ENCODE measurements at regions of chr9 and their contacts with region 1.

Region 1: DNA sequence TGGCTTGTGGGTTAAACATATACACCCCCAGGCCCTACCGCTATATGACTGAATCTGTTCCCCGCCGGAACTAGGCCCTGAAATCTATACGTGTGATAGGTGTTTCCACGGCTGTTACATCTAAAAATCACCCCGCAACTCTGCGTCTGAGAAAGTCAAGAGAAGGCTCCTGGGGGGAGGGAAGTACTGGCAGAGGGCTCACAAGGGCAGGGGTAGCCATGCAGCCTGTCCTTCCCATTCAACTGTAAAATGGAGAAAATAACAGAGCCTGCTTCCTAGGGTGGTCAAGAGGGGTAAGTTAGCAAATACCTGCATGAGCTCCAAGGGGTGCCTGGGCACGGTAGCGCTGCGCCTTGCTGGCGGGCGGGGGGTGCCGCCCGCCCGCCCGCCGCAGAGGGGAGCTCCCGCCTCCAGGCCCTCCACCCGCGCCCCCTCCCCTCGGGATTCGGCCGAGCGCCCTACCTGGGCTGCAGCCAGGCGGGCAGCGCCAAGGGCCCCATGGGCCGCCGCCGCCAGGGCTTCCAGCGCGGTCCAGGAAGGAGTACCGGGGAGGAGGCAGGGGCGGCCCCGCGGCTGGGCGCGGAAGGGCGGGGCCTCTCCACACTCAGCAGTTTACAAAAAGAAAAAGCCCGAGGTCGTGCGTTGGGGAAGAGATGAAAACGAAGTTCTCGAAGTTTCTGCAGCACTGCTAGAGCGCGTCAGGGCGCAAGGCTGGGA is at the start of gene HACD4:
- DNase-seq: peak; percentile 77
- H3K4me3 Mint-ChIP-seq: peak within 1 kb of the TSS; percentile 60
- H3K27ac Mint-ChIP-seq: peak within 1 kb of the TSS; percentile 66
- H3K4me1 Mint-ChIP-seq: peaks cover 21% of the 10 kb centered on the region
- H3K27me3 Mint-ChIP-seq: no peaks in the 10 kb centered on the region
- total RNA-seq, gene HACD4: 1.9 to 2.4 TPM

Region 2: GRCh38 chr9:19976226-19976625 is 1055.0 kb before region 1 on chr9:
- CTCF ChIA-PET with region 1: no interaction called
- POLR2A ChIA-PET with region 1: no interaction called
- intact Hi-C with region 1: loop called (anchors 2 kb)
- DNase-seq: peak; percentile 45
- H3K4me3 Mint-ChIP-seq: no peak overlapping the region
- H3K27ac Mint-ChIP-seq: peak overlapping the region; percentile 74
- H3K4me1 Mint-ChIP-seq: peaks cover 23% of the 10 kb centered on the region
- H3K27me3 Mint-ChIP-seq: no peaks in the 10 kb centered on the region

Region 3: GRCh38 chr9:20558566-20559016 is 472.7 kb before region 1 on chr9:
- CTCF ChIA-PET with region 1: no interaction called
- POLR2A ChIA-PET with region 1: no interaction called
- intact Hi-C with region 1: loop called (anchors 2 kb)
- DNase-seq: peak; percentile 60
- H3K4me3 Mint-ChIP-seq: no peak overlapping the region
- H3K27ac Mint-ChIP-seq: peak overlapping the region; percentile 65
- H3K4me1 Mint-ChIP-seq: peaks cover 86% of the 10 kb centered on the region
- H3K27me3 Mint-ChIP-seq: no peaks in the 10 kb centered on the region

Region 4: GRCh38 chr9:20972684-20973083 is 58.6 kb before region 1 on chr9:
- CTCF ChIA-PET with region 1: no interaction called
- POLR2A ChIA-PET with region 1: no interaction called
- intact Hi-C with region 1: no loop called
- DNase-seq: no peak
- H3K4me3 Mint-ChIP-seq: no peak overlapping the region
- H3K27ac Mint-ChIP-seq: no peak overlapping the region
- H3K4me1 Mint-ChIP-seq: no peaks in the 10 kb centered on the region
- H3K27me3 Mint-ChIP-seq: no peaks in the 10 kb centered on the region

Region 5: GRCh38 chr9:20997503-20998076 is 33.7 kb before region 1 on chr9:
- CTCF ChIA-PET with region 1: interaction called, 3 read pairs
- POLR2A ChIA-PET with region 1: interaction called, 9 read pairs
- intact Hi-C with region 1: loop called (anchors 1 kb)
- DNase-seq: peak; percentile 17
- H3K4me3 Mint-ChIP-seq: no peak overlapping the region
- H3K27ac Mint-ChIP-seq: peak overlapping the region; percentile 49
- H3K4me1 Mint-ChIP-seq: peaks cover 46% of the 10 kb centered on the region
- H3K27me3 Mint-ChIP-seq: no peaks in the 10 kb centered on the region

Region 6: GRCh38 chr9:21060919-21061561 is 29.8 kb after region 1 on chr9:
- CTCF ChIA-PET with region 1: no interaction called
- POLR2A ChIA-PET with region 1: no interaction called
- intact Hi-C with region 1: no loop called
- DNase-seq: peak; percentile 13
- H3K4me3 Mint-ChIP-seq: no peak overlapping the region
- H3K27ac Mint-ChIP-seq: no peak overlapping the region
- H3K4me1 Mint-ChIP-seq: peaks cover 11% of the 10 kb centered on the region
- H3K27me3 Mint-ChIP-seq: no peaks in the 10 kb centered on the region

Region 7: DNA sequence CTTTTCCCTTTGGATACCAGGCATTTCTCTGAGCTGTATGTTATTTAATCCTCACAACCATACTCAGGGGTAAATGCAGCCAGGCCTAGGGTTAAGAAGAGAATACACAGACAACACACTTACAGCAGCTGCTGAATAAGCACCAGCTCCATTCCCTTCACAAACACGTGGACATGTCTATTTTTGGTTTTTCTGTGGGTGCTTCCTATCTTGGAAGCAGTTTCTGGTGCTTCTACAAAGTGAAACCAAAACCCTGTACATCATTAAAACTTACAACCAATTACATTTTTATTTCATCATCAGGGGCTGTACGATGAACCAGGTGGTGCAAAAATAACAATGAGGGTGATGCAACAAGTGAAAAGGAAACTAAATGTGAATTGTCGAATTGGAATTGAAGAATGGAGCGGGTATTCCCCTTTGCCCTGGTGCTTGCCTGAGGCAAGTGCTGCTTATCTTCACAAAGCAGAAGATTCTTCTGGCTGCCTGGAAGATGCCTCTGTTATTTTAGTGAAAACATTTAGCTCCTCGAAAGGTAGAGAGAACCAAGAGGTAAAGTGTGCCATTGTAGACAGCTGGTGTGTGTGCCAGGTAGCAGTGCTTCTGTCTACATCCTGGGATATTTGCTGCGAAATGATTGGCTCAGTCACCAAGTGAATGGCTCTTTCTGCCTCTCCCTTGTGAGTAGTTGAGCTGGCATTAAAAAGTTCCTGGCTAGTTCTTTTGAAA is 65.1 kb after region 1 on chr9:
- CTCF ChIA-PET with region 1: no interaction called
- POLR2A ChIA-PET with region 1: interaction called, 14 read pairs
- intact Hi-C with region 1: loop called (anchors 1 kb)
- DNase-seq: peak; percentile 49
- H3K4me3 Mint-ChIP-seq: peak overlapping the region; percentile 73
- H3K27ac Mint-ChIP-seq: peak overlapping the region; percentile 85
- H3K4me1 Mint-ChIP-seq: peaks cover 34% of the 10 kb centered on the region
- H3K27me3 Mint-ChIP-seq: no peaks in the 10 kb centered on the region

Region 8: DNA sequence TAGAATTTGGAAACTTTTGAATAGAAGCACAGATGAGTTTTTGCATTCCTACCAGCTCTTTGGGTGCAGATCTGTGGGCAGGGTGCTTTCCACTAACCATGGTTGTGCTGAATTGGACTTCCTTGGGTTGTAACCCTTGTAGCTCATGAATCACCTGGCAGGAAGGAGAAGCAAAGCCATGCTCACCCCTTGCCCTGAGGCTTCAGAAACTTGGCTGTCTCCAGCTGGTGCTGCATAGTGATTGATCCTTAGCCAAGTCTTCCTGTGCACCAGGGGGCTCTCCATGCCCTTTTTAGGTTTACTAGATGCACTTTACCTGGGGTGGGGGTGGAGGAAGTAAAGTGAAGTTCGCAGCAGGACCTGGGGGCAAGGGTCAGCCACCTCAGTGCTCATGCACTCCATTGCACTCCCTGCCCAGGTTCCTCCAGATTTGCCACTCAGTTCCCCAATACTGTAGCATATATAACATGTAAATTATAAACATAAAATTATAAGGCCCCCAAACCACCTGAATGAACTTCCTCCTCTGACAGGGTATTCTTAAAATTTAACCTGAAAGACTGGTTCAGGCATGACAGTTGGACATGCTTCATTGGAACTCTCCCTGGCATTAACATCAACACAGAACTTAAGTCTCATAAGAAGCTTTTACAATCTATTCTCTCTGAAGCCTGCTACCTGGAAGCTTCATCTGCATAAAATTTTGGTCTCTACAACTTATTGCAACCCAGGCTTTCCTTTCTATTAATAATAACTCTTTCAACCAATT is 234.4 kb after region 1 on chr9:
- CTCF ChIA-PET with region 1: no interaction called
- POLR2A ChIA-PET with region 1: no interaction called
- intact Hi-C with region 1: no loop called
- DNase-seq: no peak
- H3K4me3 Mint-ChIP-seq: no peak overlapping the region
- H3K27ac Mint-ChIP-seq: no peak overlapping the region
- H3K4me1 Mint-ChIP-seq: no peaks in the 10 kb centered on the region
- H3K27me3 Mint-ChIP-seq: peaks cover 7% of the 10 kb centered on the region

Region 9: DNA sequence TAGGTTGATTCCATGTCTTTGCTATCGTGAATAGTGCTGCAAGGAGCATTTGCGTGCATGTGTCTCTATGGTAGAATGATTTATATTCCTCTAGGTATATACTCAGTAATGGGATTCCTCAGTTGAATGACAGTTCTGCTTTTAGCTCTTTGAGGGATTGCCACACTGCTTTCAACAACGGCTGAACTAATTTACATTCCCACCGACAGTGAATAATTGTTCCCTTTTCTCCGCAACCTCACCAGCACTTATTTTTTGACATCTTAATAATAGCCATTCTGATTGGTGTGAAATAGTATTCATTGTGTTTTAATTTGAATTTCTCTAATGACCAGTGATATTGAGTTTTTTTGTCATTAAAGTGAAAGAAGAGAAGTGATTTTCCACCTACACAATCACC is 255.4 kb after region 1 on chr9:
- CTCF ChIA-PET with region 1: no interaction called
- POLR2A ChIA-PET with region 1: no interaction called
- intact Hi-C with region 1: no loop called
- DNase-seq: no peak
- H3K4me3 Mint-ChIP-seq: no peak overlapping the region
- H3K27ac Mint-ChIP-seq: no peak overlapping the region
- H3K4me1 Mint-ChIP-seq: no peaks in the 10 kb centered on the region
- H3K27me3 Mint-ChIP-seq: peaks cover 8% of the 10 kb centered on the region

Measured in activated CD4-positive, alpha-beta memory T cell treated with anti-CD3 and anti-CD28 coated beads for 36 hours (primary cell).